ENCODE measurements at regions of chr5 and their contacts with region 1.

Region 1: GRCh38 chr5:159515909-159516415 is 185.7 kb upstream of the IL12B start:
- DNase-seq: peak; percentile 80
- ATAC-seq: peak; percentile 84
- H3K4me3 Mint-ChIP-seq: no peak overlapping the region
- H3K27ac Mint-ChIP-seq: no peak overlapping the region
- H3K4me1 Mint-ChIP-seq: peaks cover 3% of the 10 kb centered on the region
- H3K27me3 Mint-ChIP-seq: peaks cover 8% of the 10 kb centered on the region

Region 2: DNA sequence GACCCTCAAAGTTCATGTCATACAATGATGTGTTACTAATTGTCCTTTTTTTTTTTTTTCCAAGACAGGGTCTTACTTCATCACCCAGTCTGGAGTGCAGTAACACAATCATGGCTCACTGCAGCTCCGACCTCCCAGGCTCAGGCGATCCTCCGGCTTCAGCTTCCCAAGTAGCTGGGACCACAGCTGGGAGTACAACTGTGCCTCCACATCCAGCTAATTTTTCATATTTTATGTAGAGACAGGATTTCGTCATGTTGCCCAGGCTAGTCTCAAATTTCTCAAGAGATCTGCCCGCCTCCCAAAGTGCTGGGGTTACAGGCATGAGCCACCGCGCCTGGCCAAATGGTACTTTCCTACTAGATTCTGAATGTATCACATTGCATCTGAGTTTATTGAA is 366.9 kb before region 1 on chr5:
- CTCF ChIA-PET with region 1: no interaction called
- POLR2A ChIA-PET with region 1: no interaction called
- DNase-seq: no peak
- ATAC-seq: no peak
- H3K4me3 Mint-ChIP-seq: no peak overlapping the region
- H3K27ac Mint-ChIP-seq: no peak overlapping the region
- H3K4me1 Mint-ChIP-seq: no peaks in the 10 kb centered on the region
- H3K27me3 Mint-ChIP-seq: peaks cover 21% of the 10 kb centered on the region

Region 3: GRCh38 chr5:159504857-159505304 is 11.1 kb before region 1 on chr5:
- CTCF ChIA-PET with region 1: interaction called, 10 read pairs
- POLR2A ChIA-PET with region 1: no interaction called
- DNase-seq: no peak
- ATAC-seq: no peak
- H3K4me3 Mint-ChIP-seq: no peak overlapping the region
- H3K27ac Mint-ChIP-seq: no peak overlapping the region
- H3K4me1 Mint-ChIP-seq: no peaks in the 10 kb centered on the region
- H3K27me3 Mint-ChIP-seq: peaks cover 18% of the 10 kb centered on the region

Region 4: GRCh38 chr5:160486573-160486972 is 970.6 kb after region 1 on chr5:
- CTCF ChIA-PET with region 1: no interaction called
- POLR2A ChIA-PET with region 1: no interaction called
- DNase-seq: peak; percentile 59
- ATAC-seq: peak; percentile 86
- H3K4me3 Mint-ChIP-seq: no peak overlapping the region
- H3K27ac Mint-ChIP-seq: peak overlapping the region; percentile 48
- H3K4me1 Mint-ChIP-seq: peaks cover 24% of the 10 kb centered on the region
- H3K27me3 Mint-ChIP-seq: no peaks in the 10 kb centered on the region